Right cardiac atrium (tissue), 5 donors: ENCODE measurements at regions of chr3 and their contacts with region 1.

Region 1: DNA sequence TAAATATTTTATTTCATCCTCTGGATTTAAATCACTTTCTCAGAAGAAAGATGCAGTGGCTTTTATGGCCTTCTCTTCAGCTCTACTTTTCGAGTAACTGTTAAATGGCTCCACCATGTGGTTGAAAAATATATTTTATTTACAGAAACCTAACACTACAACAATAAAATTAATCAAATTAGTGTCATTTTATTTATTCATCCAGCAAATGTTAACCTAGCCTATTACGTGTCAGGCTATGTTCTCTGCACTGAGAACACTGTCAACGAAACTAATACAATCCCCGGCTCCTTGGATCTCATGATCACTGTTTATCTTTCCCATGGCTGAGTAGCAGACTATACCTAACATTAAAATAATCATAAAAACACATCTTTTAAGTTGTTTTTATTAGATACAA is 148.0 kb upstream of the OSTN start:
- DNase-seq: no peak
- ATAC-seq: no peak
- H3K4me3 ChIP-seq: no peak overlapping the region
- H3K27ac ChIP-seq: no peak overlapping the region
- H3K4me1 ChIP-seq: no peaks in the 10 kb centered on the region
- H3K27me3 ChIP-seq: no peaks in the 10 kb centered on the region

Region 2: DNA sequence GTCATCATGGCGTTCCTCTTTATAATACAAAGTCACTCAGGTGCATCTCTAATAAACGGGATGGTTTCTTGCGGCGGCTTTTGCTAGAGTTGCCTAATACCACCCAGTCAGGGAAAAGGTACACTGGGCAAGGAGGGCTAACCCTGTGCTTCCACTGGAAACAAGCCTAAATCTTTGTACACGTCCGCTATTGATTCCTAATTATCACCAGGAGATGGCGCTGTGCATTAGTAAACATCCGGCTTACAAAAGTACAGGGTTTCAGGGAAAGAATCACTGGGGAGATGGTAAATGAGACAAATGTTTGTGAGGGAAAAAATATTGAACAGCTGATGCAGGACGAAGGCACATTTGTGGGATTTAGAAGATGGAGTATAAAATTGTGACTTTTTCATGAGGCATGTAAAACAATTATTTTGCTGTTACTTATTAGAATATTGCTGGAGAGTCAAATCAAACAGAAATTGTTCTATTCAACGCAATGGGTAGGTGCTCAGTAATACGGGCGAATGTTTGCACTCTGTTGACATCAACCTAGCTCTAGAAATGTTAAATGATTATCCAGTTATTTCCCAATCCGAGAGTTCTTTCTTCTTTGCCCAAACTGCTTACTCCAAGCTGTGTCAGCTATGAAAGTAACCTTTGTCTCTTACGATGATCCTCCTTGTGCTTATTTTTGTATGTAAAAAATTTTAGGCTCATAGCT is 239.1 kb before region 1 on chr3:
- intact Hi-C with region 1: loop called in 3 of 4 experiments (anchors 5 to 10 kb)
- DNase-seq: peak in 1 of 3 donors; percentile 13
- ATAC-seq: peak in 1 of 2 donors; percentile 35
- H3K4me3 ChIP-seq: no peak overlapping the region
- H3K27ac ChIP-seq: no peak overlapping the region
- H3K4me1 ChIP-seq: peaks cover 2% of the 10 kb centered on the region
- H3K27me3 ChIP-seq: no peaks in the 10 kb centered on the region

Region 3: GRCh38 chr3:190883973-190884832 is 166.8 kb before region 1 on chr3:
- intact Hi-C with region 1: loop called (anchors 5 to 10 kb)
- DNase-seq: peak in 2 of 3 donors; percentile 19 to 51
- ATAC-seq: no peak
- H3K4me3 ChIP-seq: no peak overlapping the region
- H3K27ac ChIP-seq: no peak overlapping the region
- H3K4me1 ChIP-seq: no peaks in the 10 kb centered on the region
- H3K27me3 ChIP-seq: no peaks in the 10 kb centered on the region

Region 4: GRCh38 chr3:191169566-191169965 is 118.5 kb after region 1 on chr3:
- intact Hi-C with region 1: no loop called
- DNase-seq: no peak
- ATAC-seq: no peak
- H3K4me3 ChIP-seq: no peak overlapping the region
- H3K27ac ChIP-seq: no peak overlapping the region
- H3K4me1 ChIP-seq: no peaks in the 10 kb centered on the region
- H3K27me3 ChIP-seq: no peaks in the 10 kb centered on the region